PC-3 (cell line): ENCODE measurements at regions of chrX and their contacts with region 1.

Region 1: DNA sequence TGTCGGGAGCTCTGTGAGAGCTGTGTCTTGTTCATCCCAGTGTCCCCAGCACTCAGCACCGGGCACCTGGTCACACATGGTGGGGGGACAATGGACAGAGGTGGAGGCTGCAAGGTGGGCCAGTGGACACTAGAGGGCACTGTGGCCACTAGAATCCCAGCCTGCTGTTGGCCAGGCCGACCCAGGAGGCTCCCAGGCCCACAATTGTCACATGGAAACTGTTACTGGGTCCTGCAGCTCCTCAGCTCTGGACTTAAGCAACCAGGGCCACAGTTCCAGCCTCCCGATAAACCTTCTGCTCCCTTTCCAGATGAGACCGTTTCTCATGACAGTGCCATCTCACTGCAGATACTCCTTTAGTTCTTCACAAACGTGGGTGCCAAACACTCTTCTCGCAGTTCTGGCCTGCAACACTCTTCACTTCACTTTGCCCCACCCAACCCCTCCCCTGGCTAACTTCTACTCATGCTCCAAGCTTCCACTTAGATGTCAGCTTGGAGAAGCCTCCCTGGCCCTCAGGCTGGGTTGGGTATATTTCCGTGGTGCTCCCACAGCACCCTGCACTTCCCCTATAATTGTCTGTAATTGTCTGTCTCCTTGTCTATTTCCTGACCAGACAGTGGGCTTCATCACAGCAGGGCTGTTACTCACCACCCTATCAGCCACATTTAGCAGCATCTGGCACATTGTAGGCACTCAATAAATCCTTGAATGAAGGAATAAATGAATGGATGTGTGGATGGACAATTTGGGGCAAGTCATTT is 3.5 kb upstream of the IQSEC2 start:
- DNase-seq: peak; percentile 73
- ATAC-seq: peak; percentile 18
- H3K4me3 ChIP-seq: no peak overlapping the region
- H3K27ac ChIP-seq: no peak overlapping the region
- H3K4me1 ChIP-seq: peaks cover 53% of the 10 kb centered on the region
- H3K27me3 ChIP-seq: no peaks in the 10 kb centered on the region
- CTCF ChIP-seq: peak; percentile 84

Region 2: DNA sequence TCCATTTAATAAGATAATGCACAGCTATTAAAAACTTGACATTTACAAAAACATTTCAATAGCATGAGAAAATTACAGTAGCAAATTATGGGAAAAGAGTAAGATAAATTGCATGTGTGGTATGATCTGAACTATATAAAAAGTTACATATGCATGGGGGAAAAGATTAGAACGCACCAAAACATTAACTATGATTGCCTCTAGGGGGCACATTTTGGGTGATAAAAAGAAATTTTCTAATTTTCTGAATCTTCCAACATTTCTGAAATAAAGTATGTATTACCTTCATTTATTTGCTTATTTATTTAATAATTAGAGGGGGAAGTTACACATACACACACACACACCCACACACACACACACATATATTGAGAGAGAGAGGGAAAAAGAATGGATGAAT is 40.3 kb before region 1 on chrX:
- CTCF ChIA-PET with region 1: interaction called, 4 read pairs
- POLR2A ChIA-PET with region 1: no interaction called
- intact Hi-C with region 1: loop called (anchors 2 kb)
- DNase-seq: peak; percentile 22
- ATAC-seq: no peak
- H3K4me3 ChIP-seq: no peak overlapping the region
- H3K27ac ChIP-seq: no peak overlapping the region
- H3K4me1 ChIP-seq: no peaks in the 10 kb centered on the region; the same call in 1 of the 2 replicates
- H3K27me3 ChIP-seq: no peaks in the 10 kb centered on the region
- CTCF ChIP-seq: peak; percentile 62

Region 3: DNA sequence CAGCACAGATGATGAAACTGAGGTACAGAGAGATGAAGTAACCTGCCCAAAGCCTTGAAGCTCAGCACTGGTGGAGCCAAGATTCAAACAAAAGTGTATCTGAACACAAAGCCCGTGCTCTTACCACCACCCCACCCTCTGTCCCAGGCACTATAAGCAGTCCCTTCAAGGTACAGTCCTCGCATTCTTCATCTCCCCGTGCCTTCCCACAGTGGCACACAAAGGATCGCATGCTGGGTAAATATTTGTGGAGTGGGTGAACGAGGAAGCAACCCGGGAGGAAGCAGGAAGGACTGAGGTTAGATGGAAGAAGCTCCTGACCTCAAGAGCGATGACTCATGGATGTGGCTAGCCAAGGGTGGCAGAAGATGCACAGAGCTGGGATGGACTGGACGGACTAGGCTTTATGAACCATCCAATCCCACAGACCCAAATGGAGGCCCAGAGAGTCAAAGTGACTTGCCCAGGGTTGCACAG is 21.9 kb before region 1 on chrX:
- CTCF ChIA-PET with region 1: interaction called, 4 read pairs
- POLR2A ChIA-PET with region 1: no interaction called
- intact Hi-C with region 1: loop called (anchors 1 kb)
- DNase-seq: peak; percentile 87
- ATAC-seq: peak; percentile 72
- H3K4me3 ChIP-seq: peak overlapping the region; percentile 23; the same call in 1 of the 2 replicates
- H3K27ac ChIP-seq: peak overlapping the region; percentile 98
- H3K4me1 ChIP-seq: peaks cover 53% of the 10 kb centered on the region
- H3K27me3 ChIP-seq: no peaks in the 10 kb centered on the region
- CTCF ChIP-seq: no peak

Region 4: DNA sequence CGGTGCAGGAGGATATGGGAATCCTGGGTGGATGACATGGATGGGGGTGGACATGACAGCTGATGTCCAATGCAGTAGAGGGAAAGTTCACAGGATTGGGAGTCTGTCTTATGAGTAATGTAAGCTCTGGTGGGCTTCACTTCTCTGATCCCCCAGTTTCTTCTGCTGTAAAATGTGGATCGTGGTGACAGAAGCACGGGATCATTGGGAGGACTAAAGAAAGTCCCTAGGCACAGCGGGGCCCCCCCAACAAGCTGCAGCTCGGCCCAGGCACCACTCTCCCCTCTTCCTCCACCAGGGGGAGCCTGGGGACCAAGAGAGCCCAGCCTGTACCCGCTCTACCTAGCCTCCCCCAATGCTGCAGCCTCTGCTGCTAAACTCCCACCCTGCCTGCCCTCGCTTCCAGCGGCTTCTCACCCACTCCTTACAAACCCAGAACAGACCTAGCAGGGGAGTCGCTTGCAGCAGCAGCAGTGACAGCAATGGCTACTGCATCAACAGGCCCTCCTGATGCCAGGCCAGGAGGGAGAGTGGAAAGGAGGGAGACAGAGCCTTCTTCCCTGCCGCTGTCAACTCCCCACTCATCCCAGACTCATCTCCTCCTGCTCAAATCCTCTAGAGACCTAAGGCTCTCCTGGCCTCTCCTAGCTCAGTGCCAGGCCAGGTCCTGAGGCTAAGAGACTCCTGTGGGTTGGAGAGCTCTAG is 32.7 kb after region 1 on chrX:
- CTCF ChIA-PET with region 1: interaction called, 5 read pairs
- POLR2A ChIA-PET with region 1: no interaction called
- intact Hi-C with region 1: loop called (anchors 2 kb)
- DNase-seq: peak; percentile 54
- ATAC-seq: peak; percentile 60
- H3K4me3 ChIP-seq: no peak overlapping the region
- H3K27ac ChIP-seq: no peak overlapping the region
- H3K4me1 ChIP-seq: peaks cover 19% of the 10 kb centered on the region
- H3K27me3 ChIP-seq: peaks cover 17% of the 10 kb centered on the region
- CTCF ChIP-seq: peak; percentile 79

Region 5: GRCh38 chrX:53330331-53330730 is 45.5 kb after region 1 on chrX:
- CTCF ChIA-PET with region 1: interaction called, 7 read pairs
- POLR2A ChIA-PET with region 1: no interaction called
- intact Hi-C with region 1: loop called (anchors 2 kb)
- DNase-seq: no peak
- ATAC-seq: no peak
- H3K4me3 ChIP-seq: no peak overlapping the region
- H3K27ac ChIP-seq: no peak overlapping the region
- H3K4me1 ChIP-seq: no peaks in the 10 kb centered on the region
- H3K27me3 ChIP-seq: 0 out of 2 replicates have a peak, but pooled peaks cover 3% of the 10 kb centered on the region
- CTCF ChIP-seq: no peak

Region 6: GRCh38 chrX:53433651-53434639 is 149.1 kb after region 1 on chrX and contains the start of gene HSD17B10:
- CTCF ChIA-PET with region 1: no interaction called
- POLR2A ChIA-PET with region 1: no interaction called
- intact Hi-C with region 1: loop called (anchors 10 kb)
- DNase-seq: peak; percentile 90
- ATAC-seq: peak; percentile 98
- H3K4me3 ChIP-seq: peak within 1 kb of the TSS; percentile 97
- H3K27ac ChIP-seq: no peak within 1 kb of the TSS
- H3K4me1 ChIP-seq: peaks cover 7% of the 10 kb centered on the region; the same call in 1 of the 2 replicates
- H3K27me3 ChIP-seq: no peaks in the 10 kb centered on the region
- CTCF ChIP-seq: no peak
- total RNA-seq, gene HSD17B10: 181 and 191 TPM in 2 replicates